Right cardiac atrium (tissue), 5 donors: ENCODE measurements at regions of chr1 and their contacts with region 1.

Region 1: GRCh38 chr1:54406339-54407153 is at the start of gene SSBP3:
- DNase-seq: peak; percentile 93 to 97 (median 97)
- ATAC-seq: peak; percentile 94
- H3K4me3 ChIP-seq: peak within 1 kb of the TSS; percentile 88
- H3K27ac ChIP-seq: peak within 1 kb of the TSS; percentile 94
- H3K4me1 ChIP-seq: peaks cover 8% of the 10 kb centered on the region
- H3K27me3 ChIP-seq: no peaks in the 10 kb centered on the region
- total RNA-seq, gene SSBP3: 25.4 to 55.8 (median 35.8) TPM

Region 2: GRCh38 chr1:53705446-53706096 is 701.0 kb before region 1 on chr1:
- intact Hi-C with region 1: no loop called
- DNase-seq: no peak
- ATAC-seq: no peak
- H3K4me3 ChIP-seq: no peak overlapping the region
- H3K27ac ChIP-seq: no peak overlapping the region
- H3K4me1 ChIP-seq: no peaks in the 10 kb centered on the region
- H3K27me3 ChIP-seq: no peaks in the 10 kb centered on the region

Region 3: DNA sequence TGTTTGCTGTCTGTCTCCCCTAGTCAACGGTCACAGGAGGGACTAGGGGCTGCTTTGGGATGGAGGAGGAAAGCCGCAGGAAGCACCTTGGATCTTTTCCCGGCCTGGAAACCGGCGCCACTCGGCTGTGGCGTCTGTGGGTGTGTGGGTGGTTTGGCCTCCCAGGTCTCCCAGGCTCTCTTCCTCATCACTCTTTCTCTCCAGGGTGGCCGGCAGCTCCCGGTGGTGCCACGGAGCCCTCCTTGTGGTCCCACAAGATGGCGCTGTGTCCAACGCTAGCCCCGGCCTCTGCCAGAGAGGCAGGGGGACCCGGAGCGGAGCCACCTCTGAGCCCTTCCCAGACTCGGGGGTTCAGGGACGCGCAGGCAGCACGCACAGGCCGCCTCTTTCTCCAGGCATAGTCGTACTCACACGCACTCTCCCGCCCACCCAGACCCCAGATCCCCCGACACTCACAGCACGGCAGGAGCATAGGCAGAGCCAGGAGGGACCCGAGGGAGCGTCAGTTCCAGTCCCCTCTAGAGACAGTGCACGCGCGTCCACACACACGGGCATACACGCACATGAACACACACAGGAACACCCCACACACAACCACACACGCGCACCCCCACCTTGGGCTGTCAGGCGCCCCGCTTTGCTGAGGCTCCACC is 284.9 kb before region 1 on chr1:
- intact Hi-C with region 1: loop called in 3 of 4 experiments (anchors 5 to 10 kb)
- DNase-seq: peak; percentile 84 to 91 (median 90)
- ATAC-seq: peak; percentile 90 to 91
- H3K4me3 ChIP-seq: peak overlapping the region; percentile 13
- H3K27ac ChIP-seq: no peak overlapping the region
- H3K4me1 ChIP-seq: no peaks in the 10 kb centered on the region
- H3K27me3 ChIP-seq: no peaks in the 10 kb centered on the region

Region 4: DNA sequence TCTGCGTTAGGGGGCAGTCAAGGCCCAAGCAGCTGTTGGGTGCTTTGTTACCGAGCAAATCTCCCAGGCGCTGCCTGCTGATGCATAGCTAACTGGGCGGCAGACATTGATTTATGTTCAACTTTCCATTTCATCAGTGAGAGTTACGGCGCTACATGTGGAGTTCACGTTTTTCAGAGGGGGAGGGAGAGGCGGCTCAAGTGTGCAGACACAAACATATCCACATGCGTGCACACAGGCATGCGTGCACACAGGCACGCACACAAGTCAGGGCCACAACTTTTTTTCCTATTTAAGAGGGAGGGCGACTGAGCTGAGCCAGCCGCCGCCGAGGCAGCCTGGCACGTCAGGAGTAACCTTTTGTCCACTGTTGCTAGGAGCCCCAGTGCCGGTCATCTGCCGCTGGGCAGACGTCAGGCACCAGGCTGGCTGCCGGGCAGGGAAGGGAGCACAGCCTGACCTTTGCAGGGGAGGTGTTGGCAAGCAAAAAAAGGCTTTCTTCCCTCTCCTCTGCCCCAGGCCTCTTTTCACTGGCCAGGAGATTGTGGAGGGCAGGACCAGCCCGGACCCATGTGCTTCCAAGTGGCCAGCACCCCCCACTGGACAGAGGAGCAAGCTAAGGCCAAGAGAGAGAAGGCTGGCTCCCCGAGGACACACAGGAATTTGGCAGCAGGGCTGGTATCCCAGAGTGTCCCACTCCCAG is 133.3 kb before region 1 on chr1:
- intact Hi-C with region 1: loop called in 1 of 4 experiments (anchors 5 kb)
- DNase-seq: peak; percentile 79 to 86 (median 79)
- ATAC-seq: peak; percentile 53 to 76
- H3K4me3 ChIP-seq: no peak overlapping the region
- H3K27ac ChIP-seq: peak overlapping the region; percentile 81
- H3K4me1 ChIP-seq: peaks cover 43% of the 10 kb centered on the region
- H3K27me3 ChIP-seq: no peaks in the 10 kb centered on the region

Region 5: GRCh38 chr1:54323324-54323739 is 83.2 kb before region 1 on chr1:
- intact Hi-C with region 1: loop called in 2 of 4 experiments (anchors 10 kb)
- DNase-seq: no peak
- ATAC-seq: no peak
- H3K4me3 ChIP-seq: no peak overlapping the region
- H3K27ac ChIP-seq: no peak overlapping the region
- H3K4me1 ChIP-seq: peaks cover 35% of the 10 kb centered on the region
- H3K27me3 ChIP-seq: no peaks in the 10 kb centered on the region

Region 6: DNA sequence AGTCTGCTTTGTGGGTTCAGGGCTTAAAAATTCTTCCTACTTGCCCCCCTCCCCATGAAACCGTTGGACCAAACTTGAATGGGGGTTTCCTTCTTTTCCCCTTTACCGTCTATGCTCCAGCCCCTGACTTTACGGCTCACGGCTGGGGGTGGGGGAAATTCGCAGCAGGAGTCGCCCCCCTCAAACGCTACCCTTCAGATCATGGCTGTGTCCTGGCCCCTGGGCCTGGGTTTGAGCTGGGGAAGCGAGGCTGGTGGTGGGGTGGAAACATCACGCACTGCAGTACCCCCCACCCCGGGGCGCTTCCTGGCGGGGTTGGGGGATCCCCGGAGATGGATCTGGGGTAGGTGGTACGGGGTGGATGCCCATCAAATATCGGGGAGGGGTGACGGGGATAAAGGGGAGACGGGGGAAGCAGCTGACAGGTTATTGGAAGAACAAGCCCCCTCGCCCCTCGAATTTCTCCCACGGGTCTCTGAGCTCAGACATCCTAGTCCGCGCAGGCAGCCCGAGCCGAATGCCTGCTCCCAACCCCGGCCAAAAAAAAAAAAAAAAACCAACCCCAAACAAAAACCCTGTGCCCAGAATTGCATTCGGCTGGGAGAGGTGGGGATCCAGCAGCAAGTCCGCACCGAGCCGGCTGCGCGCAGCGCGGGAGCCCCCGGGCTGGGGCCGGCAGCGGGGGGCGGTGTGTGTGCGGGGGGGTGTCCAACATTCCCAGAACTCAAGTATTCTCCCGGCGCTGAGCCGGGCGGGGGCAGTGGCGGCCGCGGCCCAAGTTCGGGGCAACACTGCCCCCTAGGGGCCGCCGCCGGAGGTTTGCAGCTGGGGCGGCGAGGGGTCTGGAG is 82.5 kb after region 1 on chr1:
- intact Hi-C with region 1: loop called (anchors 1 to 2 kb)
- DNase-seq: peak; percentile 80 to 94 (median 93)
- ATAC-seq: peak; percentile 79 to 86
- H3K4me3 ChIP-seq: peak overlapping the region; percentile 79
- H3K27ac ChIP-seq: peak overlapping the region; percentile 92
- H3K4me1 ChIP-seq: peaks cover 2% of the 10 kb centered on the region
- H3K27me3 ChIP-seq: no peaks in the 10 kb centered on the region